GM10248 (cell line): ENCODE measurements at regions of chr6 and their contacts with region 1.

Region 1: DNA sequence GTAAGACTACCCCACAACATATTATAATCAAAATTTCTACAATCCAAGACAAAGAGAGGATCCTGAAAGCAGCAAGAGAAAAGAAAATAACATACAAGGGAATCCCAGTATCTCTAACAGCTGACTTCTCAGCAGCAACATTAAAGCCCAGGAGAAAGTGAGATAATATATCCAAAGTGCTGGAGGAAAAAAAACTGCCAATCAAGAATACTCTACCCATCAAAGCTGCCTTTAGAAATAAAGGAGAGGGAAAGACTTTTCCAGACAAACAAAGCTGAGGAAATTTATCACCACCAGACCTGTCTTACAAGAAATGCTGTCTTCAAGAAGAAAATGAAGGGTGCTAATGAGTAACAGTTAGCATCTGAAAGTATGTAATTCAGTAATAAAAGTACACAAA is 43.3 kb upstream of the IRAK1BP1 start:
- DNase-seq: no peak
- CTCF ChIP-seq: no peak

Region 2: DNA sequence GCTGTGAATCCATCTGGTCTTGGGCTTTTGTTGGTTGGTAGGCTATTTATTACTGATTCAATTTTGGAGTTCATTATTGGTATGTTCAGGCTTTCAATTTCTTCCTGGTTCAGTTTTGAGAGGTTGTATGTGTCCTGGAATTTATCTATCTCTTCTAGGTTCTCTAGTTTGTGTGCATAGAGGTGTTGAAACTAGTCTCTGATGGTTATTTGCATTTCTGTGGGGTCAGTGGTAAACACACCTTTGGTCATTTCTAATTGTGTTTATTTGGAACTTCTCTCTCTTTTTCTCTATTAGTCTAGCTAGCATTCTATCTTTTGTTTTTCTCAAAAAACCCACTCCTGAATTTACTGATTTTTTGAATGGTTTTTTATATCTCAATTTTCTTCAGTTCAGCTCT is 26.8 kb before region 1 on chr6:
- CTCF ChIA-PET with region 1: no interaction called
- POLR2A ChIA-PET with region 1: no interaction called
- DNase-seq: no peak
- CTCF ChIP-seq: no peak

Region 3: GRCh38 chr6:78810146-78810545 is 13.9 kb before region 1 on chr6:
- CTCF ChIA-PET with region 1: interaction called, 10 read pairs
- POLR2A ChIA-PET with region 1: no interaction called
- DNase-seq: peak; percentile 21
- CTCF ChIP-seq: peak; percentile 40

Region 4: GRCh38 chr6:78844899-78845298 is 20.9 kb after region 1 on chr6:
- CTCF ChIA-PET with region 1: no interaction called
- POLR2A ChIA-PET with region 1: no interaction called
- DNase-seq: no peak
- CTCF ChIP-seq: no peak

Region 5: DNA sequence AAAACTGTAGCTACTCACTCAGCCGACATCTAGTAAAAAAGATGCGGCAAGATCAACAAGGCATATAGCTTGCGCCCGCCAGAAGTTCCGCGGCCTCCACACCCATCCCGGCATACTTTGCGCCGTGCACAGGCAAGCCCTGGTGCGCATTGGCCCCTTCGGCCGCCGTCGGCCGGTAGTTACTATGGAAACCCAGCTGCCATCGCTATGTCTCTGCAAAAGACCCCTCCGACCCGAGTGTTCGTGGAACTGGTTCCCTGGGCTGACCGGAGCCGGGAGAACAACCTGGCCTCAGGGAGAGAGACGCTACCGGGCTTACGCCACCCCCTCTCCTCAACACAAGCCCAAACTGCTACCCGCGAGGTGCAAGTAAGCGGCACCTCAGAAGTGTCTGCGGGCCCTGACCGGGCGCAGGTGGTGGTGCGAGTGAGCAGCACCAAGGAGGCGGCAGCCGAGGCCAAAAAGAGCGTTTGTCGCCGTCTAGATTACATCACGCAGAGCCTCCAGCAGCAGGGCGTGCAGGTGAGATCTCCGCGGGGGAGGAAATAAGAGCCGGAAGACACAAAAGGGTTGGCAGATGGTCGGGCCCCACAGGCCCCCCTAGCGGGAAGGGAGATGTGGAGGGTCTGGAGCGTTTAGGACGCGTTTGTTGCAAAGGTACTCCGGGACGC is 43.5 kb after region 1 on chr6 and contains the start of gene IRAK1BP1:
- CTCF ChIA-PET with region 1: no interaction called
- POLR2A ChIA-PET with region 1: no interaction called
- DNase-seq: peak; percentile 92
- CTCF ChIP-seq: no peak